ENCODE measurements at regions of chr3 and their contacts with region 1.

Region 1: DNA sequence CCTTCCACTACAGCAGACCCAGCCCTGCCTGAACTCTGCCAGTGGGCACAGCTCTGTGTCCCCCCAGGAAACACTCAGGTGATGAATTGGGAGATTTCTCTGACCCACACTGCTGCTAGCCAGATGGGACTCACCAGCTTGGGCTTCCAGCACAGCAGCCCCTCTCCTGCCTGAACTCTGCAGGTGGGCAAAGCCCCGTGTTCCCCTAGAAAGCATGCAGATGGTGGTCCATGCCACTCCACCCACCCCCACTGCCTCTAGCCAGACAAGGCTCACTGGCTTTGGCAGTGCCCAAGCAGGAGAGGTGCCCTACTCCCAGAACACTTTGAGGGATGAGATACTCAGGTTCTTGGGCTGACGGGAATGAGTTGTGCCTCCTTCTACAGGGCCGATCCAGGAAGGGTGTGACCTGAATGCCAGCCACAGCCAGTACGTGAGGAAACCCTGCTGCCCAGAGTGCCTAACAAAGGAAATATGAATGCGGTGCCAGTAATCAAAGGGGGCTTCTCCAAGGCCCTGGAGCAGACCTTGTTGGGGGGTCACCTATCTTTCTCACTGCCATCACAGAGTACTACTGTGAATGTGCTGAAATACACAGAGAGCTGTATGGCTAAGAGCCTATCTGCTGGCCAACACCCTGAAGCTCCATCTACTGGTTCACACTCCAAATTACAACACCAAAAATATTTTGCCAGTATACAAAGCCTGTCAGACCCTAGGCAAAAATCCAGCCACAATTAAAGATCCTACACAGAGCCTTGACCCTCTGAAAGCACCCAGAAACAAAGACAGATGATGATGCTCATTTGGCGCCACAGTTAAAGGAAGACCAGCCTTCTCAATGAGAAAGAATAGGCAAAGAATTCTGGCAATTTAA is 61.9 kb downstream of the BTLA start:
- DNase-seq: peak; percentile 9
- ATAC-seq: peak; percentile 80
- H3K4me3 ChIP-seq: no peak overlapping the region
- H3K27ac ChIP-seq: no peak overlapping the region
- H3K4me1 ChIP-seq: no peaks in the 10 kb centered on the region
- H3K27me3 ChIP-seq: no peaks in the 10 kb centered on the region; a peak in 1 of 5 replicates
- CTCF ChIP-seq: peak; percentile 39
- EP300 ChIP-seq: no peak
- POLR2A ChIP-seq: no peak
- RAD21 ChIP-seq: peak; percentile 15; the same call in 1 of the 2 replicates

Region 2: GRCh38 chr3:112136959-112137693 is 300.3 kb before region 1 on chr3:
- CTCF ChIA-PET with region 1: interaction called, 3 read pairs
- POLR2A ChIA-PET with region 1: no interaction called
- in situ Hi-C with region 1: no loop called
- intact Hi-C with region 1: loop called (anchors 1 kb)
- DNase-seq: peak; percentile 42
- ATAC-seq: peak; percentile 87
- H3K4me3 ChIP-seq: no peak overlapping the region
- H3K27ac ChIP-seq: no peak overlapping the region
- H3K4me1 ChIP-seq: no peaks in the 10 kb centered on the region
- H3K27me3 ChIP-seq: no peaks in the 10 kb centered on the region; a peak in 1 of 5 replicates
- CTCF ChIP-seq: peak; percentile 70
- EP300 ChIP-seq: no peak
- POLR2A ChIP-seq: no peak
- RAD21 ChIP-seq: 0 out of 2 replicates have a peak, but pooled peaks have one; percentile 29

Region 3: DNA sequence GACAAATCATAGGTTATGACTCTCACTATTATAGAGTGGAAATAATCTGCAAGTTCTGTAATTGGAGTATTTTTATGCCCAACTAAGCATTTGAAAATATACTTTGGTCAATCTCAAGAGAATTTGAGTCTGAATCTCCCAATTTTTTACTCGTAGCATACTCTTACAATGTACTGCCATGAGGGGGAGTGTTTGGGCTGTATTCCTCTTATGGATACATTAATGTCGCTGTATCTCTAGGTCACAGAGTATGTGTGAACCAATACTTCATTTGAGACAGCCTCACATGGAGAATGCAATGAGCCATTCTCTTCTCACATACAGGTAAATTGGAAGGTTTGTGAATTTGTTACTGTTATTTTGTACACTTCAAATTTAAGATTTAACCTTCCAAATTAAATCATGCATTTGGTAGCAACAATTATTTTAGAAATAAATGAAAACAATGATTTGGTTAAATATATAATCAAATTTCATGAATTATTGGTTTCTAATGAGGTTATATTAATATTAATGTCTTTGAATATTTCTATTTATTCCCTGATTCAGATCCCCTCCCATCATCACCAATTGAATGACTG is 109.9 kb before region 1 on chr3:
- CTCF ChIA-PET with region 1: no interaction called
- POLR2A ChIA-PET with region 1: no interaction called
- in situ Hi-C with region 1: no loop called
- intact Hi-C with region 1: loop called (anchors 1 kb)
- DNase-seq: peak; percentile 39
- ATAC-seq: peak; percentile 94
- H3K4me3 ChIP-seq: no peak overlapping the region
- H3K27ac ChIP-seq: no peak overlapping the region
- H3K4me1 ChIP-seq: no peaks in the 10 kb centered on the region
- H3K27me3 ChIP-seq: no peaks in the 10 kb centered on the region
- CTCF ChIP-seq: peak; percentile 41
- EP300 ChIP-seq: no peak
- POLR2A ChIP-seq: no peak
- RAD21 ChIP-seq: peak; percentile 42; the same call in 1 of the 2 replicates

Region 4: GRCh38 chr3:112498914-112499711 is 61.7 kb after region 1 on chr3 and contains the start of gene BTLA:
- CTCF ChIA-PET with region 1: no interaction called
- POLR2A ChIA-PET with region 1: no interaction called
- in situ Hi-C with region 1: no loop called
- intact Hi-C with region 1: no loop called
- DNase-seq: no peak
- ATAC-seq: no peak
- H3K4me3 ChIP-seq: no peak within 1 kb of the TSS
- H3K27ac ChIP-seq: no peak within 1 kb of the TSS
- H3K4me1 ChIP-seq: no peaks in the 10 kb centered on the region
- H3K27me3 ChIP-seq: no peaks in the 10 kb centered on the region
- CTCF ChIP-seq: no peak
- EP300 ChIP-seq: no peak
- POLR2A ChIP-seq: no peak
- RAD21 ChIP-seq: no peak
- total RNA-seq, gene BTLA: not detected in 2 replicates